Breast epithelium (tissue), 4 donors: ENCODE measurements at regions of chr7 and their contacts with region 1.

Region 1: DNA sequence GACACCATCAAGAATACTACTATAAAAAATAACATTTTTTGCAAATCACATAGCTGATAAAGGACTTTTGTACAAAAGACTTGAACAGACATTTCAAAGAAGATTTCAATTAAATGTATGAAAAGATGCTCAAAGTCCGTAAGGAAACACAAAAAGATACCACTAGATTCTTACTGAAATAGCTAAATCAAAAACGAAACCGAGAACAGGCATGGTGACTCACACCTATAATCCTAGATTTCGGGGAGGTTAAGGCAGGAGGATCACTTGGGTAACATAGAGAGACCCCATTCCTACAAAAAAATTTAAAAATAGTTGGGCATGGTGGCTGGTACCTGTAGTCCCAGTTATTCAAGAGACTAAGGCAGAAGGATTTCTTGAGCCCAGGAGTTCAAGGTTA is 520.2 kb upstream of the GRM3 start:
- DNase-seq: no peak
- H3K4me3 ChIP-seq: no peak overlapping the region
- H3K27ac ChIP-seq: no peak overlapping the region
- H3K4me1 ChIP-seq: no peaks in the 10 kb centered on the region
- H3K27me3 ChIP-seq: no peaks in the 10 kb centered on the region
- CTCF ChIP-seq: no peak
- POLR2A ChIP-seq: no peak

Region 2: GRCh38 chr7:86226191-86226590 is 102.7 kb after region 1 on chr7:
- intact Hi-C with region 1: no loop called
- DNase-seq: no peak
- H3K4me3 ChIP-seq: no peak overlapping the region
- H3K27ac ChIP-seq: no peak overlapping the region
- H3K4me1 ChIP-seq: no peaks in the 10 kb centered on the region
- H3K27me3 ChIP-seq: no peaks in the 10 kb centered on the region
- CTCF ChIP-seq: no peak
- POLR2A ChIP-seq: no peak

Region 3: GRCh38 chr7:87494454-87494853 is 1371.0 kb after region 1 on chr7:
- intact Hi-C with region 1: loop called (anchors 5 kb)
- DNase-seq: no peak
- H3K4me3 ChIP-seq: no peak overlapping the region
- H3K27ac ChIP-seq: no peak overlapping the region
- H3K4me1 ChIP-seq: no peaks in the 10 kb centered on the region
- H3K27me3 ChIP-seq: no peaks in the 10 kb centered on the region
- CTCF ChIP-seq: no peak
- POLR2A ChIP-seq: no peak